Activated naive CD4-positive, alpha-beta T cell treated with anti-CD3 and anti-CD28 coated beads for 36 hours (primary cell): ENCODE measurements at regions of chr1 and their contacts with region 1.

Region 1: DNA sequence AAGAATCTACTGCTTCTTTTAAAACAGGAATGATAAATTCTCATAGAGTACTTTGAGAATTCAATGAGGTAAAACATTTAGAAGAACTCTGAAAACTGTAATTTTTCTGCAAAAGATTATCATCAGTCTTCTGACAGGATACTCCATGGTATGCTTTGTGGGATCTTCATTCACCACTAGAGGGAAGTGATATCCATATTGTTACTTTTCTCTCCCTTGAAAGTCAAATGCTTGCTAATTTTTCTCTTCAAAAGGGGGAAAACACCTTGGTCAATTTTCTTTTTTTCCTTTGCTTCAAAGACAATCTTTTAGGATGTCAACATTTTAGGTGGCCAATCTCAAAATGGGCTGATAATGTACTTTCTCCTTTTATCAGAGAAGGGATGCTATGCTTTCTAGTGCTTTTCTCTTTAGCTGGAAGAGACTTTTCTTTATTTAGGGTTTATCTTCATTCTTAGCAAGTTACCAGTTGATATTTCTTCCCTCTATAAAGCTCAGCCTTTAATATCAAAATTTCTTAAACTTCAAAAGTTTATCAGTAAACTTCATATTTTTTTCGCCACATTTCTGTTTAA is 95.5 kb downstream of the NEGR1 start:
- DNase-seq: no peak
- H3K4me3 Mint-ChIP-seq: no peak overlapping the region
- H3K27ac Mint-ChIP-seq: no peak overlapping the region
- H3K4me1 Mint-ChIP-seq: no peaks in the 10 kb centered on the region
- H3K27me3 Mint-ChIP-seq: no peaks in the 10 kb centered on the region

Region 2: DNA sequence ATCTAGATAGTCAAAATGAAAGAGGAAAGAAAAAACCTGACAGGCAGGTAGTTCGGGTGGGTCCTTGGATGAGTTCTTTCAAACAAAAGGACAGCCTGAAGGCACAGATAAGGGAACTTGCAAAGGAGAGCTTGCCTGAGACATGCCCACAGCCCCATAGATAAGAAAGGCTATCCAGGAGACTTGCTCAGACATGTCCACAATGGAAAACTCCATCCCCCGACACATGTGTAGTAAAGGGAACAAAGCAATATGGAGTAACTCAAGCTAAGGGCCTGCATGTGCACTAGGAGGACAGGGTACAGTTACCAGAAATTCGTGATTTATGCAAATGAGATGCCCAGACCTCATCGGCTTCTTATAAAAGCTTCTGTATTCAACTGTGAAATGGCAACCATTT is 186.0 kb before region 1 on chr1:
- CTCF ChIA-PET with region 1: no interaction called
- intact Hi-C with region 1: no loop called
- DNase-seq: no peak
- H3K4me3 Mint-ChIP-seq: no peak overlapping the region
- H3K27ac Mint-ChIP-seq: no peak overlapping the region
- H3K4me1 Mint-ChIP-seq: no peaks in the 10 kb centered on the region
- H3K27me3 Mint-ChIP-seq: no peaks in the 10 kb centered on the region

Region 3: DNA sequence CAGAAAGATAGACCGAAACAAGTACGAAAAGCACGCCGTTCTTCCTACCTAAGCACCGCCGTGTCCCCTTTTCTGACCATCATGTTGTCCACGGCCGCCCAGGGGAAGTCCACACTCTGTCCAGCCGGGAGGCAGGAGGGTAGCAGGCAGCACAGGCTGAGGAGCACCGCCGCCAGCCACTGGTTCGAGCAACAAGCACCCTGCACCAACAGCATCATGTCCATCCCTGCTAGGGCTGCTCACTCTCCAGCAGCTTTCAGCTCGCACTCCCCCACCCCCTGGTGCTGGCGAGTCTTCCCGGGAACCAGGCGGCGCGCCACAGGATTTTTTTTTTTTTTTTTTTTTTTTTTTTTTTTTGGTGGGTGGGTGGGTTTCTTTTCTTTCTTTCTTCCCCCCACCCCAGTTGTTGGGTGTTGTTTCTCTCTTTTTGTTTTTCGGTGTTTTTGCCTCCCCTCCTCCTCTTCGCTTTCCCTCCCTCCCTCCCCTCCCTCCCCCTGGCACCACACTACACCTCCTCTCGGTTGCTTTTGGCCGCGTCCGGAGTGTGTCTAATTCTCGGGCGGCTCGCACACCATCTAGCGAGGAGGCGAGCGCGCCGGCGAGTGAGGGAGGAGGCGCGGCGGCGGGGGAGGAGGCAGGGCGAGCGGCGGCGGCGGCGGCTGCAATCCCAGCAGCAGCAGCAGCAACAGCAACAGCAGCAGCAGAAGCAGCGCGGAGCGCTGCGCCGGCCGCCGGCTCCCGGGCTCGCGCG is 95.6 kb after region 1 on chr1 and contains the start of gene NEGR1:
- CTCF ChIA-PET with region 1: no interaction called
- intact Hi-C with region 1: loop called (anchors 1 kb)
- DNase-seq: peak; percentile 56
- H3K4me3 Mint-ChIP-seq: peak within 1 kb of the TSS; percentile 65
- H3K27ac Mint-ChIP-seq: no peak within 1 kb of the TSS
- H3K4me1 Mint-ChIP-seq: peaks cover 17% of the 10 kb centered on the region
- H3K27me3 Mint-ChIP-seq: peaks cover 29% of the 10 kb centered on the region
- total RNA-seq, gene NEGR1: not detected

Region 4: GRCh38 chr1:73343947-73344346 is 1157.1 kb after region 1 on chr1:
- CTCF ChIA-PET with region 1: no interaction called
- intact Hi-C with region 1: no loop called
- DNase-seq: no peak
- H3K4me3 Mint-ChIP-seq: no peak overlapping the region
- H3K27ac Mint-ChIP-seq: no peak overlapping the region
- H3K4me1 Mint-ChIP-seq: no peaks in the 10 kb centered on the region
- H3K27me3 Mint-ChIP-seq: no peaks in the 10 kb centered on the region

Region 5: GRCh38 chr1:73674945-73675561 is 1488.2 kb after region 1 on chr1:
- CTCF ChIA-PET with region 1: no interaction called
- intact Hi-C with region 1: loop called (anchors 2 kb)
- DNase-seq: no peak
- H3K4me3 Mint-ChIP-seq: no peak overlapping the region
- H3K27ac Mint-ChIP-seq: no peak overlapping the region
- H3K4me1 Mint-ChIP-seq: no peaks in the 10 kb centered on the region
- H3K27me3 Mint-ChIP-seq: no peaks in the 10 kb centered on the region